Endothelial cell of umbilical vein (primary cell): ENCODE measurements at regions of chr18 and their contacts with region 1.

Region 1: DNA sequence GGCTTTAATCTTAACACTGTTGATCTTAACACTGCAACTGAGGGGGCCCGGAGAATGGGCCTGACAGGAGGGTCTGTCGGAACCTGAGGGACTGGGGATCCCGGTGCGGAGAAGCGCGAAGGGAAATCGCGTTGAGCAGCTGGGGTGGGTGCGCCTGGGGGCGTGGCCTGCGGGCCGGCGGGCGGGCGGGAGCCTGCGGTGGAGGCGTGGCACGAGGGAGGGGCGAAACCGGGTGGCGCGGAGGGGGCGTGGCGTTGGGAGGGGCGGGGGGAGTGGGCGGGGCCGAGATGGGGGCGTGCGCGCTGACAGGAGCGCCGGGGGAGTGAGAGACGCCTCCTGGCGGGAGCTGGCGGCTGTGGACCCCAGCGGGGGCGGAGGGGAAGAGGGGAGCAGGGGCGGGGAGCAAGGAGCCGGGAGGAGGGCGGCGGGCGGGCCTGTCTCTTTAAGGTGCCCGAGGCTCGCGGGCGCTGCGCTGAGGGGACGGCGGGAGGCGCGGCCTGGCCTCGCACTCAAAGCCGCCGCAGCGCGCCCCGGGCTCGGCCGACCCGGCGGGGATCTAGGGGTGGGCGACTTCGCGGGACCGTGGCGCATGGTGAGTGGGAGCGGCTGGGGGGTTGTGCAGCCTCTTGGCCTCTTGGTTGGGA is at the start of gene TWSG1:
- DNase-seq: peak; percentile 93
- H3K4me3 ChIP-seq: peak within 1 kb of the TSS; percentile 77 to 88 (median 87)
- H3K27ac ChIP-seq: peak within 1 kb of the TSS; percentile 71
- H3K4me1 ChIP-seq: peaks cover 3% of the 10 kb centered on the region
- H3K27me3 ChIP-seq: no peaks in the 10 kb centered on the region
- CTCF ChIP-seq: peak in 1 of 2 donors; percentile 65
- POLR2A ChIP-seq: peak; percentile 65
- total RNA-seq, gene TWSG1: 57.4 and 69.6 TPM in 2 replicates

Region 2: DNA sequence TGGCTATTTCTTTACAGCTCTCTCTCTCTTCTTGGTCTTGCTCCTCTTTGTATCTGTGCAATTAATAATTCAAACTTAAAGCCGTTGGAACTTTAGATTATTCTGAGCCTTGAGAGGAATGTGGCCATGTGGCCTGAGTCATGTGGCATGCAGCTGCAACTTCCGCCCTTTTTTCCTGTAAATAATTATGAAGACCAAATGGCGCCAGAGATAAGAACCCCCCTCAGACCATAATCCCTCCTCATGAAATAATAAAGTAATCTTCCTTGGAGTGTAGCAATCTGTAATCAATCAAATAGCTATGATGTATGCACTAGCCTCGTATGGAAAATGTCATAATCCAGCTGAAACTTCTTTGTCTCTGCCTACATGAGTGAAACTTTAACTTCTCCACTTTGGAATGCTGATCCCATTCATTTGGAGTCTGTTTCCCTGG is 13.4 kb before region 1 on chr18:
- CTCF ChIA-PET with region 1: interaction called, 33 read pairs
- POLR2A ChIA-PET with region 1: interaction called, 12 read pairs
- dilution Hi-C with region 1: no loop called
- intact Hi-C with region 1: loop called (anchors 1 kb)
- DNase-seq: peak; percentile 97
- H3K4me3 ChIP-seq: no peak overlapping the region
- H3K27ac ChIP-seq: peak overlapping the region; percentile 95
- H3K4me1 ChIP-seq: peaks cover 29% of the 10 kb centered on the region
- H3K27me3 ChIP-seq: no peaks in the 10 kb centered on the region
- CTCF ChIP-seq: no peak
- POLR2A ChIP-seq: peak; percentile 48

Region 3: DNA sequence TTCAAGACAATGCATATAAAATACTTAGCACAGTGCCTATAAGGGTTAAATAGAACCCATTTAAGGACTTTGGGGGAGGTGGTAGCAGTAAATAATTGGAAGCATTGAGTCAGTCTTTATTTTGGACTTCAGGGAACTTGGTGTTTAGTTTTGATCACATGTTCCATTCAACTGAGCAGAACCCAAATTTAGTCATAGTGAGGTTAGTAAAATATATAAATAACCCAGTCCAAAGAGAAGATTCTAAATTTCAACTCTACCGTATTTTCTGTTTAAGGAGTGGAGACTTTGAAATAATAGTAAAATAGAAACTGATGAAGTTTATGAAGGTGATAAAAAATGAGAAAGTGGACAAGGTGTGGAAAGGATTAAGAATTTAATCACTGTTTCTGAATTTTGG is 19.8 kb after region 1 on chr18:
- CTCF ChIA-PET with region 1: no interaction called
- POLR2A ChIA-PET with region 1: no interaction called
- dilution Hi-C with region 1: no loop called
- intact Hi-C with region 1: no loop called
- DNase-seq: no peak
- H3K4me3 ChIP-seq: no peak overlapping the region
- H3K27ac ChIP-seq: no peak overlapping the region
- H3K4me1 ChIP-seq: no peaks in the 10 kb centered on the region
- H3K27me3 ChIP-seq: no peaks in the 10 kb centered on the region
- CTCF ChIP-seq: no peak
- POLR2A ChIP-seq: no peak

Region 4: GRCh38 chr18:9549405-9549804 is 215.0 kb after region 1 on chr18:
- CTCF ChIA-PET with region 1: no interaction called
- POLR2A ChIA-PET with region 1: no interaction called
- dilution Hi-C with region 1: no loop called
- intact Hi-C with region 1: no loop called
- DNase-seq: no peak
- H3K4me3 ChIP-seq: no peak overlapping the region
- H3K27ac ChIP-seq: no peak overlapping the region
- H3K4me1 ChIP-seq: no peaks in the 10 kb centered on the region
- H3K27me3 ChIP-seq: no peaks in the 10 kb centered on the region
- CTCF ChIP-seq: no peak
- POLR2A ChIP-seq: no peak

Region 5: GRCh38 chr18:9684881-9685614 is 350.6 kb after region 1 on chr18:
- CTCF ChIA-PET with region 1: no interaction called
- POLR2A ChIA-PET with region 1: no interaction called
- dilution Hi-C with region 1: no loop called
- intact Hi-C with region 1: no loop called
- DNase-seq: no peak
- H3K4me3 ChIP-seq: no peak overlapping the region
- H3K27ac ChIP-seq: no peak overlapping the region
- H3K4me1 ChIP-seq: no peaks in the 10 kb centered on the region
- H3K27me3 ChIP-seq: no peaks in the 10 kb centered on the region
- CTCF ChIP-seq: no peak
- POLR2A ChIP-seq: no peak